ENCODE measurements at regions of chr12 and their contacts with region 1.

Region 1: GRCh38 chr12:89756585-89757321 is 48.1 kb upstream of the ATP2B1 start:
- DNase-seq: peak; percentile 96 to 100 (median 99)
- H3K4me3 ChIP-seq: peak overlapping the region in 1 of 3 experiments; percentile 28
- H3K4me3 Mint-ChIP-seq: peak overlapping the region in 1 of 2 donors; percentile 75
- H3K27ac ChIP-seq: peak overlapping the region; percentile 92 to 99
- H3K27ac Mint-ChIP-seq: peak overlapping the region; percentile 99 to 100 (median 100)
- H3K4me1 ChIP-seq: peaks cover 33 to 46% of the 10 kb centered on the region in 2 donors
- H3K4me1 Mint-ChIP-seq: peaks cover 38% of the 10 kb centered on the region
- H3K27me3 ChIP-seq: no peaks in the 10 kb centered on the region
- H3K27me3 Mint-ChIP-seq: peaks cover 2 to 5% (median 2%) of the 10 kb centered on the region in 3 donors
- CTCF ChIP-seq: no peak

Region 2: GRCh38 chr12:89433634-89434033 is 323.1 kb before region 1 on chr12:
- intact Hi-C with region 1: no loop called
- DNase-seq: peak in 2 of 3 donors; percentile 42 to 51
- H3K4me3 ChIP-seq: no peak overlapping the region
- H3K4me3 Mint-ChIP-seq: no peak overlapping the region
- H3K27ac ChIP-seq: no peak overlapping the region
- H3K27ac Mint-ChIP-seq: peak overlapping the region in 5 of 7 donors; percentile 13 to 67 (median 39)
- H3K4me1 ChIP-seq: peaks cover 14 to 16% of the 10 kb centered on the region in 2 donors
- H3K4me1 Mint-ChIP-seq: peaks cover 32% of the 10 kb centered on the region
- H3K27me3 ChIP-seq: no peaks in the 10 kb centered on the region
- H3K27me3 Mint-ChIP-seq: no peaks in the 10 kb centered on the region
- CTCF ChIP-seq: no peak

Region 3: GRCh38 chr12:89618107-89618862 is 138.5 kb before region 1 on chr12:
- intact Hi-C with region 1: no loop called
- DNase-seq: no peak
- H3K4me3 ChIP-seq: no peak overlapping the region
- H3K4me3 Mint-ChIP-seq: no peak overlapping the region
- H3K27ac ChIP-seq: no peak overlapping the region
- H3K27ac Mint-ChIP-seq: peak overlapping the region in 2 of 7 donors; percentile 5 to 34
- H3K4me1 ChIP-seq: no peaks in the 10 kb centered on the region
- H3K4me1 Mint-ChIP-seq: no peaks in the 10 kb centered on the region
- H3K27me3 ChIP-seq: no peaks in the 10 kb centered on the region
- H3K27me3 Mint-ChIP-seq: no peaks in the 10 kb centered on the region
- CTCF ChIP-seq: no peak

Region 4: DNA sequence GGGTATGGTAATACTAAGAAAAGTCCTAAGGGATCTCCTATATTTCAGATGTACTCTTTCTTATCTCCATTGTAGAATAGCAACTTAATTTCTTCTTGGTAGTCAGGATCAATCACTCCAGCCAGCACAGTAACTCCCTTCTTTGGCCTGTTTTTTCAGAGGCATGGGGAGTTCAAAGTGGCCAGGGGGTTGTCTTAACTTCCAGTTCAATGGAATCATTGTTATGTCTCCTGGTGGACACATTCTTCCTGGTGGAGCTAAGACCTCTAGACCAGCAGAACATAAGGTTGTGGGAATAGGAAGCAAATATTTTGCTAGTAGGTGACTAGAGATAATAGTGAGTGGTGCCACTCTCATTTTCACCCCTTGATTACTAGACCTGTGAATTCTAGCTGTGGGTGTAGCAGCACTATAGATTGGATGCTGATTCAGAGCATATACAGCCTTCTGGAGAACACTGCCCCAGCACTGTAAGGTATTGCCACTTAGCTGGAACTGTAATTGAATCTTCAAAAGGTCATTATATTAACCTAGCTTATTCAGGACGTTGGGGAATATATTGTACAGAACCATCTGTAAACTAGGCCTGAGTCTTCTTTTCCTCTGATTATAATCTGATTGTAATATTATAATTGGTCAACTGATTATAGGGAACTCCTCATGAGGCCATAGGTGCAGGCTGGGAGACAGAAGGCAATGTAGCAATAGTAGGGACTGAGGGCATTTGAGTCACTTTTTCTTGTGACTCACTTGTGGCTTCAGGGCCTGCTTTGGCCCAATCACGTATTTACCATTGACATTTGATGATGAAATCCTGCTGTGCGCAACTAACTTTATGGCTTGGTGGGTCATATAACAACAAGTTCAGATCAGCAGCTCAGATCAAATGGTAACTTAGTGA is 12.1 kb after region 1 on chr12:
- intact Hi-C with region 1: loop called in 1 of 2 experiments (anchors 1 kb)
- DNase-seq: peak; percentile 97 to 100 (median 100)
- H3K4me3 ChIP-seq: no peak overlapping the region
- H3K4me3 Mint-ChIP-seq: no peak overlapping the region
- H3K27ac ChIP-seq: peak overlapping the region; percentile 34 to 94
- H3K27ac Mint-ChIP-seq: peak overlapping the region; percentile 91 to 96 (median 92)
- H3K4me1 ChIP-seq: peaks cover 13 to 17% of the 10 kb centered on the region in 2 donors
- H3K4me1 Mint-ChIP-seq: peaks cover 16% of the 10 kb centered on the region
- H3K27me3 ChIP-seq: no peaks in the 10 kb centered on the region
- H3K27me3 Mint-ChIP-seq: peaks cover 0 to 2% (median 1%) of the 10 kb centered on the region in 3 donors
- CTCF ChIP-seq: no peak

Region 5: GRCh38 chr12:89789862-89790261 is 33.1 kb after region 1 on chr12:
- intact Hi-C with region 1: loop called in 1 of 2 experiments (anchors 2 kb)
- DNase-seq: peak; percentile 92 to 97 (median 97)
- H3K4me3 ChIP-seq: peak overlapping the region in 1 of 3 experiments; percentile 46
- H3K4me3 Mint-ChIP-seq: peak overlapping the region in 1 of 2 donors; percentile 54
- H3K27ac ChIP-seq: peak overlapping the region; percentile 81 to 84
- H3K27ac Mint-ChIP-seq: peak overlapping the region; percentile 88 to 96 (median 94)
- H3K4me1 ChIP-seq: peaks cover 32 to 38% of the 10 kb centered on the region in 2 donors
- H3K4me1 Mint-ChIP-seq: peaks cover 35% of the 10 kb centered on the region
- H3K27me3 ChIP-seq: no peaks in the 10 kb centered on the region
- H3K27me3 Mint-ChIP-seq: no peaks in the 10 kb centered on the region
- CTCF ChIP-seq: no peak

Region 6: DNA sequence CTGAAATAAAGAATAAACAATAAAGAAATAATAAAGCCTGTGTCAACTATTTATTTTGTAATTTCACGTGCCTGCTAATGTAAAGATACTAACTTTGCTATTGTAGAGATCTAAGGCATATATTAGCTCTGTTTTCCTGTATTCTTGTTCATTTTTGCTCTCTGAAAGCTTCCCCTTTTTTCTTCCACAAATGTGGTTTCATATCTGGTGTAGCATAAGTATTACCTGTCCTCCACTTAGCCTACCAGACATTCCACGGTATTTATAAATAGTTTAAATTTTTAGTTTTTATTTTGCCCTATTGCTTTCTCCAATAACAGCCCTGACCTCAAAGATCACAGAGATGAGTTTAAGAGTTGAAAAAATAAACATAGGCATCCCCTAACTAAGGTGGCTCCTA is 44.5 kb after region 1 on chr12:
- intact Hi-C with region 1: no loop called
- DNase-seq: peak in 2 of 3 donors; percentile 27 to 39
- H3K4me3 ChIP-seq: no peak overlapping the region
- H3K4me3 Mint-ChIP-seq: no peak overlapping the region
- H3K27ac ChIP-seq: no peak overlapping the region
- H3K27ac Mint-ChIP-seq: peak overlapping the region in 4 of 7 donors; percentile 31 to 73 (median 48)
- H3K4me1 ChIP-seq: peaks cover 4 to 9% of the 10 kb centered on the region in 2 donors
- H3K4me1 Mint-ChIP-seq: peaks cover 16% of the 10 kb centered on the region
- H3K27me3 ChIP-seq: no peaks in the 10 kb centered on the region
- H3K27me3 Mint-ChIP-seq: peaks cover 0 to 1% (median 0%) of the 10 kb centered on the region in 3 donors
- CTCF ChIP-seq: no peak